ENCODE measurements at regions of chr9 and their contacts with region 1.

Region 1: DNA sequence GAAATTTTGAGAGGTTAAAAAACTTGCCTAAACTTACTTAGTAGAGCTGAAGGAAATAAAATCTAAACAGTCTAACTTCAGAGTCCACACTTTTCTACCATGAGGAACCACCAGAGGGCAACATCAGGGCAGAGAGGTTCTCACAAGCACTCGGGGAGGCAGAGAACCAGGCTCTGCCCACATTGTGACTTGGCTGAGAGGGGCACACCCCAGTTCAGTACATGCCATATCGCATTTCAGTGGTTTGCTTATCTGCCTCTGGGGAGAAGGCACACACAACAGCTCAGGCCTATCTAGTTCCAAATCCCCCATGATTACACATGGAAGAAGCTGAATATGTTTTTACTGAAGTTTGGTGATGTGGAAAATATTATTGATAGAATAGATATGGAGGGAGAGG is 49.2 kb downstream of the EQTN start:
- DNase-seq: no peak
- ATAC-seq: peak; percentile 91
- H3K4me3 ChIP-seq: no peak overlapping the region
- H3K27ac ChIP-seq: no peak overlapping the region
- H3K4me1 ChIP-seq: no peaks in the 10 kb centered on the region
- H3K27me3 ChIP-seq: no peaks in the 10 kb centered on the region
- CTCF ChIP-seq: peak; percentile 46 to 69 (median 65); a peak in 5 of 6 replicates
- EP300 ChIP-seq: no peak
- POLR2A ChIP-seq: no peak
- RAD21 ChIP-seq: 0 out of 2 replicates have a peak, but pooled peaks have one; percentile 28

Region 2: GRCh38 chr9:27276193-27277030 is 28.7 kb after region 1 on chr9:
- CTCF ChIA-PET with region 1: interaction called, 14 read pairs
- POLR2A ChIA-PET with region 1: no interaction called
- RAD21 ChIA-PET with region 1: interaction called, 8 read pairs
- SMC1A ChIA-PET with region 1: interaction called, 4 read pairs
- in situ Hi-C with region 1: no loop called
- intact Hi-C with region 1: loop called (anchors 2 kb)
- DNase-seq: no peak
- ATAC-seq: peak; percentile 72
- H3K4me3 ChIP-seq: no peak overlapping the region
- H3K27ac ChIP-seq: no peak overlapping the region
- H3K4me1 ChIP-seq: no peaks in the 10 kb centered on the region
- H3K27me3 ChIP-seq: no peaks in the 10 kb centered on the region
- CTCF ChIP-seq: peak; percentile 49 to 66 (median 64); a peak in 5 of 6 replicates
- EP300 ChIP-seq: no peak
- POLR2A ChIP-seq: no peak
- RAD21 ChIP-seq: peak; percentile 81